ENCODE measurements at regions of chr16 and their contacts with region 1.

Region 1: DNA sequence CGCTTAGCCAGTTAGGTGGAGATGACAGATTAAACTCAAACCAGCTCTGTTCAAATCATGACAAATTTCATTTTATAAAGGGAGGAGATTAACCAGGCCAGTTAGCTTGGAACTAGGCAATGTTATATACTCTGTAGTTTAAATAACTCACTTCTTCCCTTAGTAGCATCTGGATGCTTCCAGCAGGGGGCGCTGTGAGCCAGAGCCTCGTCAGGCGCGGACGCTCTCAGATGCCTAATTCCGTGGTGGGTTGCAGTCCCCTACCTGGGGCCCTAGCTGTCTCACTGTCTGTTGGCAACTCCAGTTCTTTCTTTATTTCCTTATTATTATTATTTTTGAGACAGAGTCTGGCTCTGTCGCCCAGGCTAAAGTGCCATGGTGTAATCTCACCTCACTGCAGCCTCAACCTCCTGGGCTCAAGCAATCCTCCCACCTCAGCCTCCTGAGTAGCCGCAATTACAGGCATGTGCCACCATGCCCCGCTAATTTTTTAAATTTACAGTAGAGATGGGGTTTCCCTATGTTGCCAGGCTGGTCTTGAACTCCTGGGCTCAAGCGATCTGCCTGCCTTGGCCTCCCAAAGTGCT is 17.3 kb upstream of the WFDC1 start:
- DNase-seq: peak; percentile 59 to 75
- ATAC-seq: peak in 1 of 4 donors; percentile 41
- H3K4me3 ChIP-seq: no peak overlapping the region
- H3K27ac ChIP-seq: no peak overlapping the region
- H3K4me1 ChIP-seq: no peaks in the 10 kb centered on the region
- H3K27me3 ChIP-seq: peaks cover 0 to 9% (median 3%) of the 10 kb centered on the region in 3 donors
- CTCF ChIP-seq: peak; percentile 74

Region 2: DNA sequence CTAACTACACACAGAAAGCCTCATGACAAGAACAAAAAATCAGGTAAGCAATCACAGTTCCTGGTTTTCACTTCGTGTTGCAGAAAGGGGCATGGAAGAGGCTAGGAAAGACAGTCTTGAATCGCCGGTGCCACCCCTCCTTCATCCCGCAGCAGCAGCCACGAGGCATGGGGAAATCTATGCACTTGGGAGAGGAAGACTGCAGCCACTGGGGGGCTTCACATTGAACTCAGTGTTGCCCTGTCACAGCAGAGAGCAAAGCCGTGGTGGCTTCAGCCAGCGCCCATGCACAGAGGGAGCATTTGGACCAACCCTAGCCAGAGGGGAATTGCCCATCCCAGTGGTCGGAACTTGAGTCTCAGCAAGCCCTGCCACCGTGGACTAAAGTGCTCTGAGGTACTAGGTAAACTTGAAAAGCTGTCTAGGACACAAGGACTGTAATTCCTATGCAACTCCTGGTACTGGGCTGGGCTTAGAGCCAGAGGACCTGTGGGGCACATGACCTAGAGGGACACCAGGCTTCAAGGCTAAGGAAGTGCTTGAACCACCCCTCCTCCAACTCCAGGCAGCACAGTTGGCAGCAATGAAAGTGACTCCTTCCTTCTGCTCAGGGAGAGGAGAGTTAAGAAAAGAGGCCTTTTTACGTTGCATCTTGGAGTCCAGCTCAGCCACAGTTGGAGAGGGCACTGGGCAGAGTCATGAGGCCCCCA is 55.8 kb after region 1 on chr16:
- intact Hi-C with region 1: no loop called
- DNase-seq: peak in 1 of 2 donors; percentile 17
- ATAC-seq: no peak
- H3K4me3 ChIP-seq: no peak overlapping the region
- H3K27ac ChIP-seq: no peak overlapping the region
- H3K4me1 ChIP-seq: no peaks in the 10 kb centered on the region
- H3K27me3 ChIP-seq: peaks cover 0 to 3% (median 0%) of the 10 kb centered on the region in 3 donors
- CTCF ChIP-seq: no peak

Region 3: GRCh38 chr16:84478172-84478947 is 201.0 kb after region 1 on chr16:
- intact Hi-C with region 1: loop called in 1 of 2 experiments (anchors 5 kb)
- DNase-seq: no peak
- ATAC-seq: no peak
- H3K4me3 ChIP-seq: no peak overlapping the region
- H3K27ac ChIP-seq: no peak overlapping the region
- H3K4me1 ChIP-seq: no peaks in the 10 kb centered on the region
- H3K27me3 ChIP-seq: no peaks in the 10 kb centered on the region
- CTCF ChIP-seq: no peak

Region 4: DNA sequence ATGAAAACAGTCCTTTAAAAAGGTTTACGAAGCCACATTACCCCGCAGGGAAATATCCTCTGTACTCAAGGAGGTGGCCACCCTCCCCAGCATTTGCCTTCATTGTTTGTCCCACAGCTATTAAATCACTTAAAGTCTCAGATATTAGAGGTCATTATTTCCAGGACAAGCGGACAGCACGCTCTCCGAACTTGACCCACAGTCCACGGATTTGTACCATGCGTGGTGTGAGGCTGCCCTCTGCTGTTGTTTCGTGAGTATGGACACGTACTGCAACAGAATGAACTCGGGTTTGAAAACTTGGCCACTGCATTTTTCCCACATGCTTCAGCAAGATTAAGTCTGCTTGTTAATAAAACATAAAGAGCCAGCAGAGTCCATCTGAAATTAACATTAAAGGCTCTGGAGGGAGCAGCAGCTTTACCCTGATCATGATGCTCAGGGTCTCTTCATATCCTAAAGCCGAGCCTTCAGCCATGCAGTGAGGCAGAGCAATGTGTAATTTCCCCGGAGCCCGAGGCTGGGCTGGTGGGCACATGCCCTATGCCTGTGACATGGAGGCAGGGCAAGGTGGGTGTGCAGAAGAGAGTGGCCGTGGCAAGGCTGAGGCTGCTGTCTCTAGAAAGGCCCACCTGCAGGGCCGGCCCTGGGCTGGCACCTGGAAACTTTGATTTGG is 207.4 kb after region 1 on chr16:
- intact Hi-C with region 1: loop called (anchors 2 to 5 kb)
- DNase-seq: peak in 1 of 2 donors; percentile 51
- ATAC-seq: peak; percentile 57 to 85 (median 77)
- H3K4me3 ChIP-seq: no peak overlapping the region
- H3K27ac ChIP-seq: no peak overlapping the region
- H3K4me1 ChIP-seq: peaks cover 6% of the 10 kb centered on the region
- H3K27me3 ChIP-seq: no peaks in the 10 kb centered on the region
- CTCF ChIP-seq: peak; percentile 74